Endothelial cell of umbilical vein (primary cell): ENCODE measurements at regions of chr9 and their contacts with region 1.

Region 1: DNA sequence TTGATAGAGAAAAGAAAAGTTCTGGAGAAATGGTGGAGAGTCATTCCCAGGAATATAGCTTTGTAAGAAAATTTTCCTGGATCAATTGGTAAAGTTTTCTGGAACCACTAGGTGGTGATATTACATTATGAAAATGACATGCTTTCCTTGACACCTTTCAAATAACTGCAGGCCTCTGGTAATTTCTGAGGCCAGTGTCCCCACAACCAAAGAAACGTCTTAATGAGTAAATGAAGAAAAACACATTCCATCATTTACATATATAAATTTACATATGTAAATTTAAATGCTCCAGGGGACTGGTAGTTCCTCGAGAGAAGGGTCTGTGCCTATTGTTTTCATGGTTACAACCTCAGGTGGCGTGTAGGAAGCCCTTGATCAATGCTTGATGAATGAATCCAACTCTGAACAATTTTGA is 17.2 kb upstream of the RGS3 start:
- DNase-seq: peak; percentile 79
- H3K4me3 ChIP-seq: no peak overlapping the region
- H3K27ac ChIP-seq: no peak overlapping the region
- H3K4me1 ChIP-seq: peaks cover 4% of the 10 kb centered on the region
- H3K27me3 ChIP-seq: no peaks in the 10 kb centered on the region
- CTCF ChIP-seq: peak; percentile 28 to 35
- POLR2A ChIP-seq: no peak

Region 2: GRCh38 chr9:113401027-113401792 is 45.1 kb before region 1 on chr9 and contains the start of gene ALAD:
- CTCF ChIA-PET with region 1: interaction called, 10 read pairs
- POLR2A ChIA-PET with region 1: no interaction called
- dilution Hi-C with region 1: no loop called
- intact Hi-C with region 1: loop called (anchors 2 kb)
- DNase-seq: peak; percentile 99
- H3K4me3 ChIP-seq: peak within 1 kb of the TSS; percentile 48 to 84 (median 51)
- H3K27ac ChIP-seq: no peak within 1 kb of the TSS
- H3K4me1 ChIP-seq: peaks cover 24% of the 10 kb centered on the region
- H3K27me3 ChIP-seq: no peaks in the 10 kb centered on the region
- CTCF ChIP-seq: peak; percentile 99
- POLR2A ChIP-seq: peak; percentile 68
- total RNA-seq, gene ALAD: 29.5 TPM in 2 replicates

Region 3: GRCh38 chr9:113484258-113484730 is 38.0 kb after region 1 on chr9:
- CTCF ChIA-PET with region 1: interaction called, 12 read pairs
- POLR2A ChIA-PET with region 1: no interaction called
- dilution Hi-C with region 1: no loop called
- intact Hi-C with region 1: no loop called
- DNase-seq: peak; percentile 99
- H3K4me3 ChIP-seq: no peak overlapping the region
- H3K27ac ChIP-seq: peak overlapping the region; percentile 31
- H3K4me1 ChIP-seq: peaks cover 23% of the 10 kb centered on the region
- H3K27me3 ChIP-seq: no peaks in the 10 kb centered on the region
- CTCF ChIP-seq: no peak
- POLR2A ChIP-seq: peak; percentile 37

Region 4: GRCh38 chr9:113501129-113501686 is 54.9 kb after region 1 on chr9:
- CTCF ChIA-PET with region 1: interaction called, 58 read pairs
- POLR2A ChIA-PET with region 1: no interaction called
- dilution Hi-C with region 1: no loop called
- intact Hi-C with region 1: loop called (anchors 1 kb)
- DNase-seq: peak; percentile 98
- H3K4me3 ChIP-seq: peak overlapping the region; percentile 94 to 99 (median 94)
- H3K27ac ChIP-seq: peak overlapping the region; percentile 100
- H3K4me1 ChIP-seq: peaks cover 34% of the 10 kb centered on the region
- H3K27me3 ChIP-seq: no peaks in the 10 kb centered on the region
- CTCF ChIP-seq: peak in 1 of 2 donors; percentile 22
- POLR2A ChIP-seq: peak; percentile 88

Region 5: GRCh38 chr9:113523421-113524236 is 77.3 kb after region 1 on chr9:
- CTCF ChIA-PET with region 1: interaction called, 48 read pairs
- POLR2A ChIA-PET with region 1: no interaction called
- dilution Hi-C with region 1: no loop called
- intact Hi-C with region 1: loop called (anchors 2 kb)
- DNase-seq: peak; percentile 85
- H3K4me3 ChIP-seq: no peak overlapping the region
- H3K27ac ChIP-seq: peak overlapping the region; percentile 80
- H3K4me1 ChIP-seq: peaks cover 65% of the 10 kb centered on the region
- H3K27me3 ChIP-seq: no peaks in the 10 kb centered on the region
- CTCF ChIP-seq: no peak
- POLR2A ChIP-seq: peak; percentile 21

Region 6: DNA sequence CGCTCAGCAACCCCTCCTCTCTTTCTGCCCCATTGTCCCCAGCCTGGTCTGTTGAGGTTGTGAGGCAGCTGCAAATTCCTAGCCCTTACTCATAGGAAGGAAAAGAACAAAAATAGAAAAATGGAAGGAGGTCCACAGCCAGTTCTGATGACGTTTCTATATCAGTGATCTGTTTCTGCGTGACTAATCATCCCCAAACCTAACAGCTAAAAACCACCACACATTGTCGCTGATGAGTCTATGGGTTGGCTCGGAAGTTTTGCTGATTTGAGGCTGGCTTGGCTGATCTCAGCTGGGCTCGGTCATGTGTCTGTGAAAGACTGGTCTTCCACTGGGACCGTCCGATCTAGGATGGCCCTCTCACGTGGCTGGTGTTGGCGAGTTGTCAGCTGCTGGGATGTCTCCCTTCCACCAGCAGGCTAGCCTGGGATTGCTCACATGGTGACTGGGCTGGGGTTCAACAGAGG is 229.2 kb after region 1 on chr9:
- CTCF ChIA-PET with region 1: interaction called, 6 read pairs
- POLR2A ChIA-PET with region 1: no interaction called
- dilution Hi-C with region 1: no loop called
- intact Hi-C with region 1: loop called (anchors 5 kb)
- DNase-seq: peak; percentile 99
- H3K4me3 ChIP-seq: no peak overlapping the region
- H3K27ac ChIP-seq: peak overlapping the region; percentile 83
- H3K4me1 ChIP-seq: peaks cover 30% of the 10 kb centered on the region
- H3K27me3 ChIP-seq: no peaks in the 10 kb centered on the region
- CTCF ChIP-seq: no peak
- POLR2A ChIP-seq: peak; percentile 64